Activated naive CD4-positive, alpha-beta T cell treated with anti-CD3 and anti-CD28 coated beads for 36 hours (primary cell): ENCODE measurements at regions of chr16 and their contacts with region 1.

Region 1: DNA sequence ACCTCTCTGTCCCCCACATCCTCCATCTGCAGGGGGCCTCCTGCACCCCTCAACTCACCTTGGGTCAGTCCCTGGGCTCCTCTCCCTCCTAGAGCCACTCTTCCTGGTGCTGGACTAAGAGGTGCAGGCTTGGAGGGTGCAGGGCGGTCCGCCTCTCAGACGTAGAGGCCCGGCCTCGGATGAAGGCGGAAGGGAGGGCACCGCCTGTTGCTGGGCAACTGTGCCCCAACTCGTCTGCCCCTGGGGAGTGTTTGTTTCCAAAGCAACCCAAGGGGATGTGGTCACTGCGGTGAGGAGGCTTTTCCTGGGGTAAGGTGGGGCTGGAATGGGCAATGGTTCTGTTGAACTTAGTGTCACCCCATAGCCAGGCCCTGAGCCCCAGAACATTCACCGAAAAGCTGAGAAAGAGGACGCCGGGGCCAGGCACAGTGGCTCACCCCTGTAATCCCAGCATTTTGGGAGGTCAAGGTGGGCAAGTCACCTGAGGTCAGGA is at the start of gene C16orf54:
- DNase-seq: peak; percentile 96
- H3K4me3 Mint-ChIP-seq: peak within 1 kb of the TSS; percentile 97
- H3K27ac Mint-ChIP-seq: peak within 1 kb of the TSS; percentile 97
- H3K4me1 Mint-ChIP-seq: peaks cover 65% of the 10 kb centered on the region
- H3K27me3 Mint-ChIP-seq: no peaks in the 10 kb centered on the region
- total RNA-seq, gene C16orf54: 11.4 to 12.1 TPM

Region 2: DNA sequence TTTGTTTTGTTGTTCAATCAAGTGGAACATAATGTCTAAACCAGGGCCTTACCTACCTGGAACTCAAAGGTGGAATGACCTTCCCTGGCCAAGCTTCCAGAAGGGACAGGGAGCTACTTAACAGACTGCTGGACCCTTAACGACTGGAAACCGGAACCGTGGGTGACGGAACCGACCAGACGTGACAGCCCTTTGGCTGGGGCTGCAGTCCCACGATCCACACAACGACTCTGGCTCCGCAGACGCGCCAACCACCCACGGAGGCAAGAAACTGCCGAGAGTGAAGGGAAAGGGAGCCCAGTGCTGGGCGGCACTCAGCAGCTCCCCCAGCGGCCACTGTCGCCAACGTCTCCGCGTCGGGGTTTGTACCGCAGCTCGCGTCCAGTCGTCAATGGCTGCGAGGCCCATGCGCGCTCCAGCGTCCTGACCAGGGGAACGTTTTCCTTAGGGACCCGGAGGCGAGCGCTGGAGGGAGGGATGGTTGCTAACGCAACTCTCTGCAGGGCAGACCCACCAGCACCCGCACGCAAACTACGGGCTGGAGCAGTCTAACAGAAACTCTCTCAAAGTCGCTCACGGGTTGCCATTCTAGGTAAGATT is 39.1 kb after region 1 on chr16:
- CTCF ChIA-PET with region 1: interaction called, 7 read pairs
- intact Hi-C with region 1: loop called (anchors 1 kb)
- DNase-seq: peak; percentile 82
- H3K4me3 Mint-ChIP-seq: peak overlapping the region; percentile 61
- H3K27ac Mint-ChIP-seq: no peak overlapping the region
- H3K4me1 Mint-ChIP-seq: peaks cover 25% of the 10 kb centered on the region
- H3K27me3 Mint-ChIP-seq: no peaks in the 10 kb centered on the region

Region 3: GRCh38 chr16:29790183-29790952 is 44.5 kb after region 1 on chr16 and contains the start of gene KIF22:
- CTCF ChIA-PET with region 1: interaction called, 7 read pairs
- intact Hi-C with region 1: loop called (anchors 1 kb)
- DNase-seq: peak; percentile 100
- H3K4me3 Mint-ChIP-seq: peak within 1 kb of the TSS; percentile 100
- H3K27ac Mint-ChIP-seq: peak within 1 kb of the TSS; percentile 98
- H3K4me1 Mint-ChIP-seq: peaks cover 35% of the 10 kb centered on the region
- H3K27me3 Mint-ChIP-seq: no peaks in the 10 kb centered on the region
- total RNA-seq, gene KIF22: 201 to 209 TPM

Region 4: DNA sequence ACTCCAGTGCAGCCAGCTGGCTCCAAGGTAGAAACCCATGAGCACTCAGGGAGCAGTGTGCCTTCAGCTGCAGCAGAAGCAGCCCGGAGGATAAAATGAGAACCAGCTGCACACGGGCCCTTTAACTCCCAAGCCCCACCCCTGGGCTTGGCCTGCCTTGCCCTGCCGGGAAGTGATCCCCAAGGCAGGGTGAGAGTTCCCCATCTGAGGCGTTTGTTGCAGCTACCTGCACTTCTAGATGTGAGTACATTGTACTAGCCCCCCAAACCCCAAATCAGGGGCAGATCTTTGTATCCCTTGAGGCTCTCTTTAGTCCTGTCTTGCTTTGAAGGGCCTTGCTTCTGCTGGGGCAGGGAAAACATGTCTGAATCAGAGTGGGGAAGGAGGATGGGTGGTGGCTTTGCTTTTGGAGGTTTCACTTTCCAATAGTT is 74.4 kb after region 1 on chr16 and contains the start of gene MVP:
- CTCF ChIA-PET with region 1: no interaction called
- intact Hi-C with region 1: no loop called
- DNase-seq: peak; percentile 81
- H3K4me3 Mint-ChIP-seq: peak within 1 kb of the TSS; percentile 94
- H3K27ac Mint-ChIP-seq: peak within 1 kb of the TSS; percentile 98
- H3K4me1 Mint-ChIP-seq: peaks cover 67% of the 10 kb centered on the region
- H3K27me3 Mint-ChIP-seq: no peaks in the 10 kb centered on the region
- total RNA-seq, gene MVP: 84.1 to 86.9 TPM